HEK293 (cell line): ENCODE measurements at regions of chr17 and their contacts with region 1.

Region 1: GRCh38 chr17:50200457-50201275 is 765 bp downstream of the COL1A1 start:
- H3K4me3 ChIP-seq: peak overlapping the region; percentile 41
- H3K27ac ChIP-seq: no peak overlapping the region
- H3K4me1 ChIP-seq: no peaks in the 10 kb centered on the region
- CTCF ChIP-seq: peak; percentile 99

Region 2: GRCh38 chr17:50087246-50087911 is 113.3 kb before region 1 on chr17:
- CTCF ChIA-PET with region 1: no interaction called
- POLR2A ChIA-PET with region 1: no interaction called
- H3K4me3 ChIP-seq: no peak overlapping the region
- H3K27ac ChIP-seq: no peak overlapping the region
- H3K4me1 ChIP-seq: no peaks in the 10 kb centered on the region
- CTCF ChIP-seq: peak; percentile 91

Region 3: GRCh38 chr17:50100921-50101345 is 99.7 kb before region 1 on chr17:
- CTCF ChIA-PET with region 1: no interaction called
- POLR2A ChIA-PET with region 1: no interaction called
- H3K4me3 ChIP-seq: no peak overlapping the region
- H3K27ac ChIP-seq: no peak overlapping the region
- H3K4me1 ChIP-seq: peaks cover 7% of the 10 kb centered on the region
- CTCF ChIP-seq: no peak

Region 4: DNA sequence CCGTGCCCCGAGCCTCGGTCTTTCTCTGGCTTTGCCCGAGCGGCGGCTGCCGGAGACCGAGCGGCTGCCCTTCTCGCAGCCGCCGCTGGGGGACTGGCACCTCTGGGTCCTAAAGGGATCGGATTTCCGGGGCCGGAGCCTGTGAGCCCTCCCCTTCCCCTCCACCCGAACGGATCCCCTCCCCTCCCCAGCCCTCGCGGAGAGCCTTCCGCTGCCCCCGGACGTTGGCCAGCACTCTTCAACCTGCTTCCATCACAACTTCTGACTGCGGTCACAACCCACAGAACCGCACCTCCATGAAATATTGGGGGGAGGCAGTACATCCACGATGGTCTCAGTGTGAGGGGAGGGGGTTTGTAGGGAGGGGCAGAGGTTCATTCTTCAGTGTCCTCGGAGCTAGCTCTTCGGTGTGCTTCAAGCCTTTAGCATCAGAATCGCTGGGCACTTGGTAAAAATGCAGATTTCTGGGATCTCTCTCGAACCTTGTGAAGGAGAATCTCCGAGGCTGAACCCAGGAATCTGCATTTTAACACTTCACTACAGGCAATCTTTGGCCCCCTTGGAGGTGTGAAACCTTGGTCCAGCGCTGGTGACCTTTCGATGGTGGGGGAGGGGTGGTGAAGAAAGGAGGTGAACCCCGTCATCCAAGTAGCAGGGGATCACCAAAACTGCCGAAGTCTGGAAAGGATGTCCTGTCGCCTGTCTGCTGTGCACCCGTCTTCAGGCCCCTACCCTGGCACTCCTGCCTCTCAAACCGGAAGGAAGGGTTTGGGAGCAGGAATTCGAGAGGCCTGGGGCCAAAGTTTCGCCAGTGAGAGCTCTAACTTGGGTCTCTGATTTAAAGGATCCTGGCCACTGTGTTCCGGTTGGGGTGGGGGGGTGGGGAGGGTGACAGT is 49.4 kb before region 1 on chr17:
- CTCF ChIA-PET with region 1: interaction called, 5 read pairs
- POLR2A ChIA-PET with region 1: interaction called, 11 read pairs
- H3K4me3 ChIP-seq: peak overlapping the region; percentile 77
- H3K27ac ChIP-seq: peak overlapping the region; percentile 93
- H3K4me1 ChIP-seq: peaks cover 15% of the 10 kb centered on the region
- CTCF ChIP-seq: peak; percentile 67

Region 5: DNA sequence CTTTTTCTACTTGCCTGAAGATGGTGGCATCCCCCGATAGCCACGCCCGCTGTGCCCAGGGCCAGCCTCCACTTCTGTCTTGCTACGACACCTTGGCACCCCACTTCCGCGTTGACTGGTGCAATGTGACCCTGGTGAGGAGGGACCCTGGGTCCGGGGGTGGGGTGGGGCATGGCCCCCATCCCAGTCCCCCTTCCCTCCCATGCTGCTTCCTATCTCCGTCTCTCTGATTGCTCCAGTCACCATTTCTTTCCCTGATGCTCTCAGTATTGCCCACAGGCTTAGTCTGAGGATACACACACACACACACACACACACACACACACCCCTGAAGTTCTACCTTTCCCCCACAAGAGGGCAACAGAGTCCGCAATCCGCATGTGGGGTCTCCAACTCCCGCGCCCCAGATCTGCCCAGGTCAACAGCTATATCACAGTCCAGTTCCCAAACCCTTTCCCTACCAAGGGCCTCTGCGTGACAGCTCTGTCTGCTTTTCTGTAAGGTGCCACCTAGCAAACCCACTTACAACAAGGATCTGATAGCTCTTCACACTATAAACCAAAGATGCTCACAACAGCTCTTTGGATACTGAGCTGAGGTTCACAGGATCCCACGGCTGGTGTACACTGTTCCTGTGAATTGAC is 31.4 kb before region 1 on chr17:
- CTCF ChIA-PET with region 1: interaction called, 174 read pairs
- POLR2A ChIA-PET with region 1: interaction called, 11 read pairs
- H3K4me3 ChIP-seq: no peak overlapping the region
- H3K27ac ChIP-seq: no peak overlapping the region
- H3K4me1 ChIP-seq: no peaks in the 10 kb centered on the region
- CTCF ChIP-seq: peak; percentile 98

Region 6: GRCh38 chr17:50183421-50183994 is 17.2 kb before region 1 on chr17:
- CTCF ChIA-PET with region 1: interaction called, 36 read pairs
- POLR2A ChIA-PET with region 1: interaction called, 31 read pairs
- H3K4me3 ChIP-seq: no peak overlapping the region
- H3K27ac ChIP-seq: no peak overlapping the region
- H3K4me1 ChIP-seq: peaks cover 3% of the 10 kb centered on the region
- CTCF ChIP-seq: no peak

Region 7: GRCh38 chr17:50213026-50214022 is 12.7 kb after region 1 on chr17:
- CTCF ChIA-PET with region 1: interaction called, 217 read pairs
- POLR2A ChIA-PET with region 1: interaction called, 6 read pairs
- H3K4me3 ChIP-seq: no peak overlapping the region
- H3K27ac ChIP-seq: no peak overlapping the region
- H3K4me1 ChIP-seq: peaks cover 6% of the 10 kb centered on the region; the same call in 1 of the 2 replicates
- CTCF ChIP-seq: peak; percentile 44; the same call in 1 of the 2 replicates

Region 8: GRCh38 chr17:50269477-50270434 is 69.1 kb after region 1 on chr17:
- CTCF ChIA-PET with region 1: interaction called, 487 read pairs
- POLR2A ChIA-PET with region 1: interaction called, 9 read pairs
- H3K4me3 ChIP-seq: no peak overlapping the region
- H3K27ac ChIP-seq: no peak overlapping the region
- H3K4me1 ChIP-seq: peaks cover 12% of the 10 kb centered on the region
- CTCF ChIP-seq: peak; percentile 31; the same call in 1 of the 2 replicates

Region 9: DNA sequence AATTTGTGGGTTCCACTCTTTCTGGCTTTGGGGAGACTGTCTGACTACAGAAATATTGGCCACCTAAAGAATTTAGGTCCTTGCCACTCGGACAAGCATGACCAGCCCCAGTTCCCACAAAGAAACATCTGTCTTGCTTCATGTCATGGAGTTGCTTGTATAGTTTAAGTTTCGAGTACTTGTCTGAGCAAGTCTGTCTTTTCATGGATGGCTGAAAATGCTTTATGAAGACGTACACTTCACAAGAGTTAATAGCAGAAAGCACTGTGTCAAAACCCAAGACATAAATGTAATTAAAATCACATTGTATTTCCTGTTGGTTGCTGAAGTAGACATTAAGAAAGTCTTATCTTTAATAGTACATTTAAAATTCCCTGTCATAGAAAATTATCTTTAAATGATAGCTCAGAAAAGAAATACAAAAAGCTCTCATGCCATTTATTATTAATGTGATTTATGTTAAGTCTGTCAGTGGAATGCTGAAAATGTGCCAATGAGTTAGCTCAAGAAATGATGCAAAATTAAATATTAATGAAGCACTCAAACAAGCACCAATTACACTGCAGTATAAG is 115.4 kb after region 1 on chr17:
- CTCF ChIA-PET with region 1: interaction called, 13 read pairs
- POLR2A ChIA-PET with region 1: no interaction called
- H3K4me3 ChIP-seq: no peak overlapping the region
- H3K27ac ChIP-seq: no peak overlapping the region
- H3K4me1 ChIP-seq: no peaks in the 10 kb centered on the region
- CTCF ChIP-seq: no peak